PC-9 (cell line): ENCODE measurements at regions of chr2 and their contacts with region 1.

Region 1: GRCh38 chr2:201642579-201643215 is 606 bp downstream of the TMEM237 start:
- DNase-seq: peak; percentile 46 to 87
- H3K4me3 ChIP-seq: peak overlapping the region; percentile 80
- H3K27ac ChIP-seq: peak overlapping the region; percentile 73
- H3K4me1 ChIP-seq: peaks cover 11% of the 10 kb centered on the region; the same call in 1 of the 2 replicates
- H3K27me3 ChIP-seq: no peaks in the 10 kb centered on the region
- CTCF ChIP-seq: no peak

Region 2: DNA sequence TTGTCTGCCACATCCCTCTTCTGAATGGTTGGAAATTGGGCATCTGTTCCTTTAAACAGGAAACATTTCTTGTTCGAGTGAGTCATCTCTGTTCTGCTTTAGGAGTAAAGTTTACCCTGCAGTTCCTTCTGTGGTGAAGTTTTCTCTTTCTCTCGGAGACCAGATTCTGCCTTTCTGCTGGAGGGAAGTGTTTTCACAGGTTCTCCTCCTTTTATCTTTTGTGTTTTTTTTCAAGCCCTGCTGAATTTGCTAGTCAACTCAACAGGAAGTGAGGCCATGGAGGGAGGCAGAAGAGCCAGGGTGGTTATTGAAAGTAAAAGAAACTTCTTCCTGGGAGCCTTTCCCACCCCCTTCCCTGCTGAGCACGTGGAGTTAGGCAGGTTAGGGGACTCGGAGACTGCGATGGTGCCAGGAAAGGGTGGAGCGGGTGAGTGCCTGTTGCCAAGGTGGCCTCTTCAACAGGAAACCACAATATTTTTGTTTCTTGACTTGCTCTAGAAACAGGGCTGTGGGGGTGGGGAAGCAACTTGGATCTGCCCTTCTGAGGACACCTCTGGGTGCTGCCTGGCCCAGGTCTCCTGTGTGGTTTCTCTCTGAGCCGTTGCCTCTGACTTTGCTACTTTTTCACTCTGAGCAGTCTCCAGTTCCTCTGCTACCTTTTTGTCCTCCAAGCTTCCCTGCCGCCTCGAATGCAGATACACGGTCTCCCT is 384.6 kb before region 1 on chr2:
- CTCF ChIA-PET with region 1: no interaction called
- POLR2A ChIA-PET with region 1: no interaction called
- intact Hi-C with region 1: loop called (anchors 5 kb)
- DNase-seq: peak; percentile 86 to 91
- H3K4me3 ChIP-seq: peak overlapping the region; percentile 59
- H3K27ac ChIP-seq: peak overlapping the region; percentile 94
- H3K4me1 ChIP-seq: peaks cover 38% of the 10 kb centered on the region
- H3K27me3 ChIP-seq: no peaks in the 10 kb centered on the region
- CTCF ChIP-seq: no peak